ENCODE measurements at regions of chr3 and their contacts with region 1.

Region 1: GRCh38 chr3:112642912-112643506 is 2.1 kb upstream of the CCDC80 start:
- DNase-seq: peak; percentile 58 to 87 (median 70)
- ATAC-seq: peak; percentile 98
- H3K4me3 ChIP-seq: no peak overlapping the region
- H3K27ac ChIP-seq: no peak overlapping the region
- H3K4me1 ChIP-seq: peaks cover 0 to 9% of the 10 kb centered on the region in 2 experiments; a peak in 3 of 5 replicates
- H3K27me3 ChIP-seq: peaks cover 0 to 7% of the 10 kb centered on the region in 2 experiments; a peak in 2 of 5 replicates
- CTCF ChIP-seq: peak; percentile 79 to 84 (median 83)
- EP300 ChIP-seq: no peak
- POLR2A ChIP-seq: no peak
- RAD21 ChIP-seq: peak; percentile 84 to 86

Region 2: GRCh38 chr3:112519424-112520001 is 123.5 kb before region 1 on chr3:
- CTCF ChIA-PET with region 1: no interaction called
- POLR2A ChIA-PET with region 1: no interaction called
- in situ Hi-C with region 1: no loop called
- intact Hi-C with region 1: no loop called
- DNase-seq: peak; percentile 14 to 41 (median 22)
- ATAC-seq: peak; percentile 91
- H3K4me3 ChIP-seq: no peak overlapping the region
- H3K27ac ChIP-seq: no peak overlapping the region
- H3K4me1 ChIP-seq: no peaks in the 10 kb centered on the region
- H3K27me3 ChIP-seq: no peaks in the 10 kb centered on the region
- CTCF ChIP-seq: peak; percentile 45 to 66 (median 47); a peak in 4 of 6 replicates
- EP300 ChIP-seq: no peak
- POLR2A ChIP-seq: no peak
- RAD21 ChIP-seq: peak; percentile 59 to 77

Region 3: DNA sequence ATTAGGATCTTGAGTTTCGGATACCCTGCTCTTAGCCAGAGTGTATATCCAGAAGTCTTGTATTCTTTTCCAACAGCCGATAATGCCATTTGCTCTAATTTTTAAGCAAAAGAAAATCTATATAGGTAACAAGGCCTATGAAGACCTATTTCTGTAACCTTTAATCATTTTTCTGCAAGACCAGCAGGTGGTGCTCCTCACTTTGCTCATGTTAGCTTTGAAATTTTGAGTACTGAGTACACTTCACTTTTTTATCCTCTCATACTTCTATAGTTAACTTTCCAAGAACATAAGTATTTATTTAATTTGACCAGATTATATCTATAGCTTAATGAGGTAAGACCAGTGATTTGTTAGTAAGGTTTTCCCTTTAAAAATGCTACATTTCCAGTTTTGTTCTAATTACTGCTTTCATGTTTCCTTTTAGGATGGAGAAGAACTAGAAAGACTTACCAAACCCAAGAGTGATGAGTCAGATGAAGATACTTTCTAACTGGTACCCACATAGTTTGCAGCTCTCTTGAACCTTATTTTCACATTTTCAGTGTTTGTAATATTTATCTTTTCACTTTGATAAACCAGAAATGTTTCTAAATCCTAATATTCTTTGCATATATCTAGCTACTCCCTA is 60.6 kb before region 1 on chr3:
- CTCF ChIA-PET with region 1: interaction called, 4 read pairs
- POLR2A ChIA-PET with region 1: interaction called, 5 read pairs
- in situ Hi-C with region 1: no loop called
- intact Hi-C with region 1: loop called (anchors 1 kb)
- DNase-seq: peak in 3 of 4 experiments; percentile 11 to 49 (median 16)
- ATAC-seq: peak; percentile 53; the same call in 2 of the 3 replicates
- H3K4me3 ChIP-seq: no peak overlapping the region
- H3K27ac ChIP-seq: no peak overlapping the region
- H3K4me1 ChIP-seq: no peaks in the 10 kb centered on the region
- H3K27me3 ChIP-seq: no peaks in the 10 kb centered on the region
- CTCF ChIP-seq: peak; percentile 30 to 72 (median 40); a peak in 5 of 6 replicates
- EP300 ChIP-seq: no peak
- POLR2A ChIP-seq: no peak
- RAD21 ChIP-seq: peak; percentile 67 to 76

Region 4: GRCh38 chr3:112734718-112735350 is 91.8 kb after region 1 on chr3:
- CTCF ChIA-PET with region 1: no interaction called
- POLR2A ChIA-PET with region 1: no interaction called
- in situ Hi-C with region 1: loop called (anchors 10 kb)
- intact Hi-C with region 1: loop called (anchors 2 kb)
- DNase-seq: peak; percentile 37 to 73 (median 49)
- ATAC-seq: peak; percentile 93
- H3K4me3 ChIP-seq: no peak overlapping the region
- H3K27ac ChIP-seq: no peak overlapping the region
- H3K4me1 ChIP-seq: peaks cover 0 to 4% of the 10 kb centered on the region in 2 experiments; a peak in 1 of 5 replicates
- H3K27me3 ChIP-seq: no peaks in the 10 kb centered on the region
- CTCF ChIP-seq: peak; percentile 53 to 75 (median 65)
- EP300 ChIP-seq: no peak
- POLR2A ChIP-seq: no peak
- RAD21 ChIP-seq: peak; percentile 72 to 79

Region 5: GRCh38 chr3:112979240-112979832 is 336.3 kb after region 1 on chr3:
- CTCF ChIA-PET with region 1: interaction called, 3 read pairs
- POLR2A ChIA-PET with region 1: no interaction called
- in situ Hi-C with region 1: loop called (anchors 10 kb)
- intact Hi-C with region 1: loop called (anchors 2 kb)
- DNase-seq: peak; percentile 7 to 31 (median 10)
- ATAC-seq: no peak
- H3K4me3 ChIP-seq: no peak overlapping the region
- H3K27ac ChIP-seq: no peak overlapping the region
- H3K4me1 ChIP-seq: no peaks in the 10 kb centered on the region
- H3K27me3 ChIP-seq: no peaks in the 10 kb centered on the region
- CTCF ChIP-seq: peak in 2 of 3 experiments; percentile 36 to 53; a peak in 3 of 6 replicates
- EP300 ChIP-seq: no peak
- POLR2A ChIP-seq: no peak
- RAD21 ChIP-seq: peak; percentile 60 to 72

Region 6: DNA sequence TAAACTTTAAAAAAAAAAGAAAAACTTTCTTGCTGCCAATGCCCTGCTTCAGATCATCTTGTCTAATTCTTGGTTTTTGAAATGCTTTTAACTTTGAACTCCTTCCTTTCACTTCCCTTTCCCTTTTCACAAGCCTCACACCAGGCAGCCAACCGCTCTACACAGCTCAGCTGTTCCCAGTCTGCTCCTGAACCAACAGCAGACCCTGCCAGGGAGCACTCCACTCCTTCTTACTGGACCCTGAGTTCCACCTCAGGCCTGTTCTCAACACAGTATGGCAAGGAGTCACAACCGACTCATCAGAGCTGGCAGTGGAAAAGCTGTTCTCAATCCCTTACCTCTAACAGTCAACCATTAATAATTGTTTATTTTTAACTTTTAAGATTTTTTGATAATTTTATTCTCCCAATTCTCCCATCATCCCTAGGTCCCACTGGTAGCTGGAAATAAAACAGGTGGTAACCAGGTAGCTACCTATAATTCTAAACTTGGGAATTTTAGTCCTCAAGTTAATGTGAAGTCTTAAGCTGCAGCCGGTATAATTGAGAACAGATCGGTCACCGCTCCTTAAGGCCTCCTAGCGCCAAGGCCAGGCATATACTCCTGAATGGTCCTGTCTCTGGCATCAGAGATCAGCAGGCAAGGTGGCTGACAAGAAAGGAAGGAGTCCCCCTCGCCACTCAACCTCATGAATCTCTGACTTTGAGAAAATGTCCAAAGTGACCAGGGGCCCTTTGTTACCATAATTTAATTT is 612.3 kb after region 1 on chr3:
- CTCF ChIA-PET with region 1: no interaction called
- POLR2A ChIA-PET with region 1: no interaction called
- in situ Hi-C with region 1: loop called (anchors 25 kb)
- intact Hi-C with region 1: no loop called
- DNase-seq: peak in 3 of 4 experiments; percentile 7 to 14 (median 10)
- ATAC-seq: peak; percentile 69
- H3K4me3 ChIP-seq: no peak overlapping the region
- H3K27ac ChIP-seq: no peak overlapping the region
- H3K4me1 ChIP-seq: no peaks in the 10 kb centered on the region; a peak in 1 of 5 replicates
- H3K27me3 ChIP-seq: peaks cover 0 to 13% of the 10 kb centered on the region in 2 experiments; a peak in 3 of 5 replicates
- CTCF ChIP-seq: peak in 2 of 3 experiments; percentile 13 to 16; a peak in 1 of 6 replicates
- EP300 ChIP-seq: no peak
- POLR2A ChIP-seq: no peak
- RAD21 ChIP-seq: no peak

Measured in K562 (cell line).